ENCODE measurements at regions of chr11 and their contacts with region 1.

Region 1: GRCh38 chr11:61792310-61793085 is at the starts of genes FEN1 and TMEM258:
- DNase-seq: peak; percentile 92 to 95
- ATAC-seq: peak; percentile 84 to 90
- H3K4me3 ChIP-seq: peak within 1 kb of the TSS; percentile 56
- H3K27ac ChIP-seq: peak within 1 kb of the TSS; percentile 92 to 100
- H3K4me1 ChIP-seq: peaks cover 24% of the 10 kb centered on the region; the same call in 1 of the 3 replicates
- CTCF ChIP-seq: no peak
- EP300 ChIP-seq: no peak
- POLR2A ChIP-seq: peak; percentile 79
- RAD21 ChIP-seq: no peak
- polyA plus RNA-seq, gene FEN1: 36.3 and 38.4 TPM in 2 replicates
- polyA plus RNA-seq, gene TMEM258: 280 and 375 TPM in 2 replicates

Region 2: GRCh38 chr11:61733120-61733978 is 59.1 kb before region 1 on chr11:
- CTCF ChIA-PET with region 1: interaction called, 15 read pairs
- POLR2A ChIA-PET with region 1: no interaction called
- DNase-seq: peak; percentile 81 to 95
- ATAC-seq: peak; percentile 69 to 89
- H3K4me3 ChIP-seq: no peak overlapping the region
- H3K27ac ChIP-seq: 0 out of 6 replicates have a peak overlapping the region, but pooled peaks of 1 of the 2 experiments have one; percentile 41
- H3K4me1 ChIP-seq: peaks cover 27% of the 10 kb centered on the region
- CTCF ChIP-seq: peak; percentile 94
- EP300 ChIP-seq: no peak
- POLR2A ChIP-seq: no peak
- RAD21 ChIP-seq: peak; percentile 93 to 97

Region 3: DNA sequence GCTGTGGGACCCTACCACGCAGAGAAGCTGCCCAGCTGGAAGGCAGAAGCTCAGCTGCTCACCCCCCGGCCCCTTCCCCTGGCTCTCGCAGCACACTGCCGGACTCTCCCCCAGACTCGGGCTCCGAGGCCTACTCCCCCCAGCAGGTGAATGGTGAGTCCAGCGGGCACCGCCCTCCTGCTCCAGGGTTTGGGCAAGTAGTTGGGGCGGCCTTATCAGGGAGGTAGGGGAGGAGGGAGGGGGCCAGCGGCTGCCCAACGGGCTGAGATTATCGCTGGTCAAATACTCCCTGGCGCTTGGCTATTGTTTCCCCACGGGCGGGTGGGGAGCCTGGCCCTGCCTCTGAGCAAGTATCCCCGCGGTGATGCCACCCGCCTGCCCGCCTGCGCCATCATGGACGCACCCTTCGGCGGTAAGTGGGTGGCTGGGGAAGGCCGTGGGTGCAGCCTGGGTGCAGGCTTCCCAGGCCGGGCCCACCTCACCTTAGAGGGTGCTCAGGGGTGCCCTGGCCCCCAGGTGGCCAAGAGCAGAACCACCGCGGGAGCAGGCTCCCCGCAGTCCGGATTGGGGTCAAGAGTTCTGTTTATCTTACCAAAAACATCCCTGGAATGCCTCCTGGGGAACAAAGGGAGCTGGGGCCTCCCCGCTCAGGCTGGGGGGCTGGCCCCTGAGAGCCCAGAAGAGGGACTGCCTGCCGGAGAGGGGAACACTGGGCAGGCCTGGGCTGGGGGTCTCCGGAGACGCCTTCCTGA is 23.2 kb before region 1 on chr11:
- CTCF ChIA-PET with region 1: interaction called, 42 read pairs
- POLR2A ChIA-PET with region 1: no interaction called
- DNase-seq: peak in 1 of 2 experiments; percentile 58
- ATAC-seq: peak; percentile 35 to 67; a peak in 3 of 6 replicates
- H3K4me3 ChIP-seq: no peak overlapping the region
- H3K27ac ChIP-seq: peak overlapping the region; percentile 40 to 70; a peak in 5 of 6 replicates
- H3K4me1 ChIP-seq: peaks cover 75% of the 10 kb centered on the region
- CTCF ChIP-seq: 0 out of 3 replicates have a peak, but pooled peaks have one; percentile 12
- EP300 ChIP-seq: no peak
- POLR2A ChIP-seq: no peak
- RAD21 ChIP-seq: peak in 1 of 2 experiments; percentile 7; a peak in 1 of 5 replicates

Region 4: GRCh38 chr11:61816736-61817455 is 24.4 kb after region 1 on chr11 and contains the start of gene FADS1:
- CTCF ChIA-PET with region 1: interaction called, 145 read pairs
- POLR2A ChIA-PET with region 1: interaction called, 43 read pairs
- DNase-seq: peak; percentile 96 to 97
- ATAC-seq: peak; percentile 67 to 75
- H3K4me3 ChIP-seq: peak within 1 kb of the TSS; percentile 83
- H3K27ac ChIP-seq: peak within 1 kb of the TSS; percentile 98 to 99
- H3K4me1 ChIP-seq: peaks cover 44% of the 10 kb centered on the region
- CTCF ChIP-seq: peak; percentile 76
- EP300 ChIP-seq: 0 out of 5 replicates have a peak, but pooled peaks of 1 of the 2 experiments have one; percentile 10
- POLR2A ChIP-seq: peak; percentile 53
- RAD21 ChIP-seq: peak; percentile 42 to 60; a peak in 4 of 5 replicates
- polyA plus RNA-seq, gene FADS1: 163 and 175 TPM in 2 replicates

Region 5: GRCh38 chr11:61885166-61885778 is 92.8 kb after region 1 on chr11:
- CTCF ChIA-PET with region 1: interaction called, 21 read pairs
- POLR2A ChIA-PET with region 1: no interaction called
- DNase-seq: no peak
- ATAC-seq: peak; percentile 8 to 26; a peak in 2 of 6 replicates
- H3K4me3 ChIP-seq: no peak overlapping the region
- H3K27ac ChIP-seq: 0 out of 6 replicates have a peak overlapping the region, but pooled peaks of 1 of the 2 experiments have one; percentile 30
- H3K4me1 ChIP-seq: peaks cover 31% of the 10 kb centered on the region
- CTCF ChIP-seq: no peak
- EP300 ChIP-seq: no peak
- POLR2A ChIP-seq: no peak
- RAD21 ChIP-seq: no peak

Region 6: DNA sequence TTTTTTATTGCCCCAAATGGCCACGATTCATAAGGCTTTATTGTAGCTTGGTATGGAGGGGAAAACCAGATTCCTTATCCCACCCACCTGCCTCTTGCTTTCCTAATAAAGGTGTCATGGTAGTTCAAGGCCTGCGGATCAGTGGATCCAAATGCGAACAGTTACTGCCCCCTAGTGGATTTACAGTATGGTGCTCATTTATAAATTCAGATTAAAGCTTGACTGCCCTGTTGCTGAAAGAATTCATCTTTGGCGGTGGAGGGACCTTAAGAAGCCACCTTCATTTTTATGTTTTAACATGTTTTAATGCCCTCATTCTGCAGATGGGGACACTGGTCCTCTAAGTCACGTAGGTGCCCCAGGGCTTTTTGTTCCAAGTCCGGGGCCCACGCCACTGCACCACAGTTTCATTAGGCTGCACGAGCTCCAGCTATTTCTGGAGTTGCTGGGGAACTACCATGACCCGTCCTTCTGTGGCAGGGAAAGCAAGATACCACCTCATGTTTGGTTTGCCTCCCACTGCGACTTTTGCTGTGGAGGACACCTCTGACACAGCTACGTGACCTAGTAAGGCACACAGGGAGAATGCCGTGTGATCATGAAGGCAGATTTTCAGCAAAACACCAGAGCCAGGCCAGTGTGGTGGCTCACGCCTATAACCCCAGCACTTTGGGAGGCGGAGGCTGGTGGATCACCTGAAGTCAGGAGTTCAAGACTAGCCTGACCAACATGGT is 315.7 kb after region 1 on chr11:
- CTCF ChIA-PET with region 1: interaction called, 121 read pairs
- POLR2A ChIA-PET with region 1: interaction called, 5 read pairs
- DNase-seq: peak; percentile 49 to 74
- ATAC-seq: peak; percentile 73 to 82; a peak in 4 of 6 replicates
- H3K4me3 ChIP-seq: no peak overlapping the region
- H3K27ac ChIP-seq: peak overlapping the region in 1 of 2 experiments; percentile 29; a peak in 2 of 6 replicates
- H3K4me1 ChIP-seq: peaks cover 13% of the 10 kb centered on the region; the same call in 1 of the 3 replicates
- CTCF ChIP-seq: peak; percentile 93
- EP300 ChIP-seq: no peak
- POLR2A ChIP-seq: no peak
- RAD21 ChIP-seq: peak; percentile 91 to 96

Measured in A549 (cell line).